HCT116 (cell line): ENCODE measurements at regions of chr18 and their contacts with region 1.

Region 1: DNA sequence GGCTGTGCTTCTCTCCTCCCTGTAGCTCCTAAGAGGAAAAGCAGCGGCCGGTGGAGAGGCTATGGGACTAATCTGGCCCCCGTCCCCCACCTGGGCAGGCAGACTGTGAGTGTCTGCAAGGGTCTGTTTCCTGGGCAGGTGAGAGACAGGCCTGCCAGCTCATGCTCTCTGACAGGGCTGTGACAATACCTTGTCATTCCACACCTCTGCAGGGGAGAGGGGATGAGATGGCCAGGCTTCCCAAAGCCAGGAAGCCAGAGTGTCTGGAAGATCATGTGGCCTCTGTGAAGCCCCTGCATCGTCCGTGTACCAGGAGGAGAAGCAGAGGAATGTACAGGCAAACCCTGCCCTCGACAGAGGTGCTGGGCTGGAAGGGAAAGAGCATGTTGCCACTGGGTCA is 142.5 kb upstream of the GATA6 start:
- DNase-seq: no peak
- ATAC-seq: no peak
- H3K4me3 ChIP-seq: no peak overlapping the region
- H3K27ac ChIP-seq: no peak overlapping the region
- H3K4me1 ChIP-seq: peaks cover 1 to 5% of the 10 kb centered on the region in 2 experiments
- H3K27me3 ChIP-seq: no peaks in the 10 kb centered on the region
- CTCF ChIP-seq: no peak
- POLR2A ChIP-seq: no peak
- RAD21 ChIP-seq: no peak

Region 2: DNA sequence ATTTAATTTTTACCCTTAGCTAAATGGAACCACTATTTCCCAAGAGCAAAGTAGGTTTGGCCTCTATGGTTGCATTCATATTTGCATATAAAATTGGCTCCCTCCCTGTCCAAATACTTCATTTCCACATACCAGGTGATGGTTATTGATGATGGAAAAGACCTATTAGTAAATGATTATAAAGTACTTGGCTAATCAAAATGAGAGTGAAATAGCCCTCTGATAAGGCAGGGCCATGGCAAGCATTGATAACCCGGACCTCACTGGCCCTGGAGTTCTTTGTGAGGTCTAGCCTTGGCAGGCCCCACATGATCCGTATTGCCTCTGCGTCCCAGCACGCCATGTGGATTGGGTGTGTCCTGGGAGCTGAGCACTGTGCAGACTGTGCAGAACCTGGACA is 58.6 kb before region 1 on chr18:
- CTCF ChIA-PET with region 1: no interaction called
- POLR2A ChIA-PET with region 1: no interaction called
- RAD21 ChIA-PET with region 1: no interaction called
- intact Hi-C with region 1: loop called (anchors 5 kb)
- DNase-seq: no peak
- ATAC-seq: no peak
- H3K4me3 ChIP-seq: no peak overlapping the region
- H3K27ac ChIP-seq: no peak overlapping the region
- H3K4me1 ChIP-seq: no peaks in the 10 kb centered on the region
- H3K27me3 ChIP-seq: no peaks in the 10 kb centered on the region
- CTCF ChIP-seq: no peak
- POLR2A ChIP-seq: no peak
- RAD21 ChIP-seq: no peak